ENCODE measurements at regions of chr12 and their contacts with region 1.

Region 1: GRCh38 chr12:104750061-104750460 is 208.0 kb downstream of the SLC41A2 start:
- DNase-seq: peak; percentile 62
- ATAC-seq: peak; percentile 59
- H3K4me3 ChIP-seq: no peak overlapping the region
- H3K4me3 Mint-ChIP-seq: peak overlapping the region; percentile 74
- H3K27ac ChIP-seq: no peak overlapping the region
- H3K27ac Mint-ChIP-seq: peak overlapping the region; percentile 79
- H3K4me1 ChIP-seq: peaks cover 25 to 33% of the 10 kb centered on the region in 2 donors
- H3K4me1 Mint-ChIP-seq: peaks cover 77% of the 10 kb centered on the region
- H3K27me3 ChIP-seq: no peaks in the 10 kb centered on the region
- H3K27me3 Mint-ChIP-seq: no peaks in the 10 kb centered on the region
- CTCF ChIP-seq: no peak

Region 2: DNA sequence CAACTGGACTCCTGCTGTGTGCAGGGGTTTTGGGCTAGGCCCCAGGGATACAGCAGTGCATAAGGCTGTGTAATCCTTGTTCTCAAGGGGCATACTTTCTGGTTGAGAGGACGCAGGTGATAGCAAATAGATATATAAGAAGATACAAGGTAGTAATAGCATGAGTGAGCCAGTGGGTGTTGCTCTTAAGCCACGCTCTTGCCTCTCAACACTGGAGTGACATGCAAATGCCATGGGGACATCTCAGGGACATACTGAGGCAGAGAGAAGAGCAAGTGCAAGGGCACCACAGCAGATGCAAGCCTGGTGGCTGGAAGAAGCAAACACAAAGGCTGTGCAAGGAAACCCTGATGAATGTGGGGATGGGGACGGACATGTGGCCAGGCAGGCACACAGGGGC is 70.0 kb before region 1 on chr12:
- CTCF ChIA-PET with region 1: no interaction called
- POLR2A ChIA-PET with region 1: no interaction called
- intact Hi-C with region 1: loop called (anchors 5 kb)
- DNase-seq: peak; percentile 57
- ATAC-seq: peak; percentile 64
- H3K4me3 ChIP-seq: no peak overlapping the region
- H3K4me3 Mint-ChIP-seq: no peak overlapping the region
- H3K27ac ChIP-seq: peak overlapping the region in 1 of 2 donors; percentile 4
- H3K27ac Mint-ChIP-seq: peak overlapping the region; percentile 79
- H3K4me1 ChIP-seq: peaks cover 46 to 55% of the 10 kb centered on the region in 2 donors
- H3K4me1 Mint-ChIP-seq: peaks cover 79% of the 10 kb centered on the region
- H3K27me3 ChIP-seq: no peaks in the 10 kb centered on the region
- H3K27me3 Mint-ChIP-seq: no peaks in the 10 kb centered on the region
- CTCF ChIP-seq: peak; percentile 15

Region 3: DNA sequence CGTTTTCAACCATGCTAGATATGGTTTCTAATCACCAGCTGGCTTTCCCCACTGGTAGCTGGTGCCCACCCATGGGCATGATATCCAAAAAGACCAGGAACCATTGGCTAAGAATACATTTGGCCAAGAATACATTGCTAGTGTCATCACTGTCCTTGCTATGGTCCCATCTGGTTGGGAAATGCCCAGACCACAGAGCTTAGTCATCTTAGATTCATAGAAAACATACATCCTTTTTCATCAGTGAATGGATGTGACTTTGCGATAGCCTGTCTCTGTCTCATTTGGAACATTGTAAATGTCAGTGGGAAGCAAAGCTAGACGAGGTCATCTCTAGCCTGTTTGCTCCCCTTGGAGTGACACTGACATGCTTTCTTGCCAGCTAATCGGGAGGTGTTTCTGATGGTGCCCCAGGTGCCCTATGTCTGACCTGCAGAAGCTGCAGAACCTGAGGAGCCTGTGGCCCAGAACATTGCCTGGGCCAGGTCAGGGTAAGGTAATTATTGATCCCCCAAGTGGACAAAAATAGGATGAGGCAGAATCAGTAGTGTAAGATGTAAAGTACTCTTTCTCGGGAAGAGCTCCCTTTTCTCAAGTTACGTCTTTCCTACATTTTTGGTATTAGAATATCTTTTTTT is 13.2 kb after region 1 on chr12:
- CTCF ChIA-PET with region 1: interaction called, 5 read pairs
- POLR2A ChIA-PET with region 1: interaction called, 10 read pairs
- intact Hi-C with region 1: no loop called
- DNase-seq: no peak
- ATAC-seq: no peak
- H3K4me3 ChIP-seq: no peak overlapping the region
- H3K4me3 Mint-ChIP-seq: no peak overlapping the region
- H3K27ac ChIP-seq: no peak overlapping the region
- H3K27ac Mint-ChIP-seq: no peak overlapping the region
- H3K4me1 ChIP-seq: peaks cover 18% of the 10 kb centered on the region in 2 donors
- H3K4me1 Mint-ChIP-seq: peaks cover 26% of the 10 kb centered on the region
- H3K27me3 ChIP-seq: peaks cover 0 to 14% (median 10%) of the 10 kb centered on the region in 4 experiments
- H3K27me3 Mint-ChIP-seq: peaks cover 10% of the 10 kb centered on the region
- CTCF ChIP-seq: no peak

Region 4: GRCh38 chr12:104790296-104791125 is 40.5 kb after region 1 on chr12:
- CTCF ChIA-PET with region 1: interaction called, 3 read pairs
- POLR2A ChIA-PET with region 1: no interaction called
- intact Hi-C with region 1: loop called (anchors 5 kb)
- DNase-seq: peak; percentile 57
- ATAC-seq: peak; percentile 58
- H3K4me3 ChIP-seq: peak overlapping the region in 3 of 5 experiments; percentile 1 to 28 (median 8)
- H3K4me3 Mint-ChIP-seq: peak overlapping the region; percentile 83
- H3K27ac ChIP-seq: no peak overlapping the region
- H3K27ac Mint-ChIP-seq: peak overlapping the region; percentile 22
- H3K4me1 ChIP-seq: peaks cover 8 to 9% of the 10 kb centered on the region in 2 donors
- H3K4me1 Mint-ChIP-seq: peaks cover 7% of the 10 kb centered on the region
- H3K27me3 ChIP-seq: no peaks in the 10 kb centered on the region
- H3K27me3 Mint-ChIP-seq: no peaks in the 10 kb centered on the region
- CTCF ChIP-seq: peak; percentile 80